WTC11 (cell line): ENCODE measurements at regions of chr6 and their contacts with region 1.

Region 1: GRCh38 chr6:26270903-26271667 is 93.9 kb upstream of the BTN3A2 start:
- DNase-seq: peak; percentile 65
- ATAC-seq: peak; percentile 28
- H3K4me3 Mint-ChIP-seq: no peak overlapping the region
- H3K27ac Mint-ChIP-seq: no peak overlapping the region
- H3K4me1 Mint-ChIP-seq: peaks cover 35% of the 10 kb centered on the region
- H3K27me3 Mint-ChIP-seq: no peaks in the 10 kb centered on the region
- CTCF ChIP-seq: no peak

Region 2: GRCh38 chr6:26204332-26205165 is 66.5 kb before region 1 on chr6:
- CTCF ChIA-PET with region 1: interaction called, 3 read pairs
- POLR2A ChIA-PET with region 1: interaction called, 152 read pairs
- DNase-seq: peak; percentile 90
- ATAC-seq: peak; percentile 58
- H3K4me3 Mint-ChIP-seq: no peak overlapping the region
- H3K27ac Mint-ChIP-seq: no peak overlapping the region
- H3K4me1 Mint-ChIP-seq: peaks cover 22% of the 10 kb centered on the region
- H3K27me3 Mint-ChIP-seq: no peaks in the 10 kb centered on the region
- CTCF ChIP-seq: no peak

Region 3: DNA sequence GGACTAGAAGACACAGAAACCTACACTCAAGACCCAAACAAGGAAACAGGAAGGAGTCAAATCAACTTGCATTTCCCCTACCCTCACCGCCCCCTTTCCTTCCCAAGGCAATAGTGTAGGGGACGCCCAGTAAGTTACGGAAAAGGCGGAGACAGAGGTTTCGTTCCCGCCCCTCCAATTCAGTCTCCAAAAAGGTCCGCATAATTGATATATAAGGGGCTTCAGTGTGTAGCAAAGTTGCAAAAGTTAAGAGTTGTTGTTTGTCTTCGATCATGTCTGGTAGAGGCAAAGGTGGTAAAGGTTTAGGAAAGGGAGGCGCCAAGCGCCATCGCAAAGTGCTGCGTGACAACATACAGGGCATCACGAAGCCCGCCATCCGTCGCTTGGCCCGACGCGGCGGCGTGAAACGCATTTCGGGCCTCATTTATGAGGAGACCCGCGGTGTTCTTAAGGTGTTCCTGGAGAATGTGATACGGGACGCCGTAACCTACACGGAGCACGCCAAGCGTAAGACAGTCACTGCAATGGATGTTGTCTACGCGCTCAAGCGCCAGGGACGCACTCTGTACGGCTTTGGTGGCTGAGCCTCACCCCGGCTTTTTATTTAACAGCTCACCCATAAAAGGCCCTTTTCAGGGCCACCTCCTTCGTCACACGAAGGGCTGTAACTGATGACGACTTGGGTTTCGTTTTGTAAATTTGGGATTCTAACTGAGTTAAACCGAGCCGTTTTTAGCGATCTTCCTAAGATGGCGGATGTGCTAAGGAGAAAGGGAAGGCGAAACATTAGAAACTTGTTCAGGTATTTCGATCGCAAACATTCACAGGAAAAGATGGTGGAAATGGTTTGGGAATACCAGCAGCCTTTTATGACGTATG is 30.7 kb before region 1 on chr6:
- CTCF ChIA-PET with region 1: interaction called, 4 read pairs
- POLR2A ChIA-PET with region 1: interaction called, 146 read pairs
- DNase-seq: peak; percentile 81
- ATAC-seq: peak; percentile 84
- H3K4me3 Mint-ChIP-seq: peak overlapping the region; percentile 75
- H3K27ac Mint-ChIP-seq: peak overlapping the region; percentile 98
- H3K4me1 Mint-ChIP-seq: peaks cover 48% of the 10 kb centered on the region
- H3K27me3 Mint-ChIP-seq: no peaks in the 10 kb centered on the region; the same call in 1 of the 2 replicates
- CTCF ChIP-seq: no peak

Region 4: GRCh38 chr6:26290941-26291340 is 19.9 kb after region 1 on chr6:
- CTCF ChIA-PET with region 1: no interaction called
- POLR2A ChIA-PET with region 1: interaction called, 153 read pairs
- DNase-seq: no peak
- ATAC-seq: no peak
- H3K4me3 Mint-ChIP-seq: no peak overlapping the region
- H3K27ac Mint-ChIP-seq: no peak overlapping the region
- H3K4me1 Mint-ChIP-seq: peaks cover 8% of the 10 kb centered on the region; the same call in 1 of the 2 replicates
- H3K27me3 Mint-ChIP-seq: peaks cover 4% of the 10 kb centered on the region
- CTCF ChIP-seq: no peak

Region 5: DNA sequence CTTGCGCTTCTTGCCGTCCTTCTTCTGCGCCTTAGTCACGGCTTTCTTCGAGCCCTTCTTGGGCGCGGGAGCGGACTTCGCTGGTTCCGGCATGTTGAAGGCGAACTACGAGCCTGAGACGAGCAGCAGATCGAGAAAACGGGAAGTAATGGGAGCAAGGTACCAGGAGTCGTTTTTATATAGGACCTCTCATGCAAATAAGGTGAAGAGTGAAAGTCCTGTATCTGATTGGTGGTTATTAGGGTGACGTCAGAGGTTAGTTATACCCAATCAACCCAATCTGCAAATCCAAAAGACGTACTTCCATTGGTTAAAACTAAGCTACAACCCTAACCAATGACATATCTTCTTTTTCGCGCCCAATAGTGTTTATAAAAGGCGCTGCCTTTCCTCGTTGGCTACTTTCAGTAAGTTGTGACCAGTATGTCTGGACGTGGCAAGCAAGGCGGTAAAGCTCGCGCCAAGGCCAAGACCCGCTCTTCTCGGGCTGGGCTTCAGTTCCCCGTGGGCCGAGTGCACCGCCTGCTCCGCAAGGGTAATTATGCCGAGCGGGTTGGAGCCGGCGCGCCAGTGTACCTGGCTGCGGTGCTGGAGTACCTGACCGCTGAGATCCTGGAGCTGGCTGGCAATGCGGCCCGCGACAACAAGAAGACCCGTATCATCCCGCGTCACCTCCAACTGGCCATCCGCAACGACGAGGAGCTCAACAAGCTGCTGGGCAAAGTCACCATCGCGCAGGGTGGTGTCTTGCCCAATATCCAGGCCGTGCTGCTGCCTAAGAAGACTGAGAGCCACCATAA is 875.8 kb after region 1 on chr6:
- CTCF ChIA-PET with region 1: no interaction called
- POLR2A ChIA-PET with region 1: interaction called, 41 read pairs
- DNase-seq: peak; percentile 80
- ATAC-seq: peak; percentile 67
- H3K4me3 Mint-ChIP-seq: no peak overlapping the region
- H3K27ac Mint-ChIP-seq: no peak overlapping the region
- H3K4me1 Mint-ChIP-seq: peaks cover 23% of the 10 kb centered on the region
- H3K27me3 Mint-ChIP-seq: no peaks in the 10 kb centered on the region
- CTCF ChIP-seq: no peak